H1 (cell line): ENCODE measurements at regions of chr18 and their contacts with region 1.

Region 1: DNA sequence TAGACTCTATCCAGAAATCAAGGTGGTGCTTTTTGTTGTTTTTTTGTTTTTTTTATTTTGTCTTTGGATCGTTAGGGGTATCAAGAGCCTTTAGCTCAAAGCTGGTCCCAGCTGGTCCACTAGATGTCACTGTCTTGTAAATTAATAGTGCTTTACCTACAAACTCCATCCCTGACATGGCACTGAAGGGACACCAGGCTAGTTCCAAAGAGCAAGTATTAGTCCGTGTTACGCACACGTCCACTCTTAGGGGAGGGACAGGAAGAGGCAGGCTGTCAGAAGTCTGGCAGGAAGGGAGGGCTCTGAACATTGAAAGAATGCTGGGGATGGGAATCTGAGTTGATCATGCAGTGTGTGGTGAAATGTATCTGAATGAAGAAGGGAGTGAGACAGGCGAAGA is 85.9 kb upstream of the CCBE1 start:
- DNase-seq: peak in 1 of 2 experiments; percentile 57
- H3K4me3 ChIP-seq: no peak overlapping the region
- H3K27ac ChIP-seq: no peak overlapping the region
- H3K4me1 ChIP-seq: no peaks in the 10 kb centered on the region
- H3K27me3 ChIP-seq: no peaks in the 10 kb centered on the region
- CTCF ChIP-seq: peak in 2 of 3 experiments; percentile 52 to 59; a peak in 3 of 4 replicates
- EP300 ChIP-seq: no peak
- POLR2A ChIP-seq: no peak
- RAD21 ChIP-seq: peak; percentile 61 to 66

Region 2: GRCh38 chr18:59769129-59769865 is 13.8 kb before region 1 on chr18:
- CTCF ChIA-PET with region 1: interaction called, 17 read pairs
- POLR2A ChIA-PET with region 1: no interaction called
- DNase-seq: no peak
- H3K4me3 ChIP-seq: no peak overlapping the region
- H3K27ac ChIP-seq: no peak overlapping the region
- H3K4me1 ChIP-seq: no peaks in the 10 kb centered on the region
- H3K27me3 ChIP-seq: no peaks in the 10 kb centered on the region
- CTCF ChIP-seq: no peak
- EP300 ChIP-seq: no peak
- POLR2A ChIP-seq: no peak
- RAD21 ChIP-seq: no peak

Region 3: GRCh38 chr18:60110836-60111235 is 327.7 kb after region 1 on chr18:
- CTCF ChIA-PET with region 1: no interaction called
- POLR2A ChIA-PET with region 1: no interaction called
- DNase-seq: no peak
- H3K4me3 ChIP-seq: no peak overlapping the region
- H3K27ac ChIP-seq: no peak overlapping the region
- H3K4me1 ChIP-seq: no peaks in the 10 kb centered on the region
- H3K27me3 ChIP-seq: no peaks in the 10 kb centered on the region
- CTCF ChIP-seq: no peak
- EP300 ChIP-seq: no peak
- POLR2A ChIP-seq: no peak
- RAD21 ChIP-seq: no peak